GM12878 (cell line): ENCODE measurements at regions of chr12 and their contacts with region 1.

Region 1: GRCh38 chr12:75526655-75527511 is 15.5 kb upstream of the KRR1 start:
- DNase-seq: peak; percentile 54
- ATAC-seq: peak; percentile 98
- H3K4me3 ChIP-seq: no peak overlapping the region
- H3K27ac ChIP-seq: no peak overlapping the region
- H3K4me1 ChIP-seq: no peaks in the 10 kb centered on the region; the same call in 1 of the 2 replicates
- H3K27me3 ChIP-seq: no peaks in the 10 kb centered on the region
- CTCF ChIP-seq: peak; percentile 53 to 73 (median 62); a peak in 5 of 6 replicates
- EP300 ChIP-seq: peak; percentile 36 to 58; a peak in 1 of 4 replicates
- POLR2A ChIP-seq: no peak
- RAD21 ChIP-seq: peak; percentile 82

Region 2: GRCh38 chr12:75390899-75391538 is 135.9 kb before region 1 on chr12 and contains the start of gene GLIPR1L2:
- CTCF ChIA-PET with region 1: interaction called, 5 read pairs
- POLR2A ChIA-PET with region 1: interaction called, 5 read pairs
- RAD21 ChIA-PET with region 1: interaction called, 4 read pairs
- SMC1A ChIA-PET with region 1: interaction called, 10 read pairs
- in situ Hi-C with region 1: no loop called
- intact Hi-C with region 1: no loop called
- DNase-seq: peak; percentile 86
- ATAC-seq: peak; percentile 98
- H3K4me3 ChIP-seq: peak within 1 kb of the TSS; percentile 62
- H3K27ac ChIP-seq: peak within 1 kb of the TSS; percentile 91
- H3K4me1 ChIP-seq: peaks cover 7% of the 10 kb centered on the region
- H3K27me3 ChIP-seq: no peaks in the 10 kb centered on the region
- CTCF ChIP-seq: peak; percentile 79 to 91 (median 90)
- EP300 ChIP-seq: no peak
- POLR2A ChIP-seq: peak; percentile 76
- RAD21 ChIP-seq: peak; percentile 57
- polyA plus RNA-seq, gene GLIPR1L2: 0.04 TPM in 1 of 2 experiments, not detected in the other

Region 3: GRCh38 chr12:75437564-75437963 is 89.3 kb before region 1 on chr12:
- CTCF ChIA-PET with region 1: no interaction called
- POLR2A ChIA-PET with region 1: no interaction called
- RAD21 ChIA-PET with region 1: no interaction called
- SMC1A ChIA-PET with region 1: no interaction called
- in situ Hi-C with region 1: no loop called
- intact Hi-C with region 1: no loop called
- DNase-seq: no peak
- ATAC-seq: peak; percentile 93
- H3K4me3 ChIP-seq: no peak overlapping the region
- H3K27ac ChIP-seq: no peak overlapping the region
- H3K4me1 ChIP-seq: no peaks in the 10 kb centered on the region
- H3K27me3 ChIP-seq: no peaks in the 10 kb centered on the region
- CTCF ChIP-seq: peak; percentile 35 to 42 (median 41); a peak in 3 of 6 replicates
- EP300 ChIP-seq: no peak
- POLR2A ChIP-seq: no peak
- RAD21 ChIP-seq: peak; percentile 48

Region 4: DNA sequence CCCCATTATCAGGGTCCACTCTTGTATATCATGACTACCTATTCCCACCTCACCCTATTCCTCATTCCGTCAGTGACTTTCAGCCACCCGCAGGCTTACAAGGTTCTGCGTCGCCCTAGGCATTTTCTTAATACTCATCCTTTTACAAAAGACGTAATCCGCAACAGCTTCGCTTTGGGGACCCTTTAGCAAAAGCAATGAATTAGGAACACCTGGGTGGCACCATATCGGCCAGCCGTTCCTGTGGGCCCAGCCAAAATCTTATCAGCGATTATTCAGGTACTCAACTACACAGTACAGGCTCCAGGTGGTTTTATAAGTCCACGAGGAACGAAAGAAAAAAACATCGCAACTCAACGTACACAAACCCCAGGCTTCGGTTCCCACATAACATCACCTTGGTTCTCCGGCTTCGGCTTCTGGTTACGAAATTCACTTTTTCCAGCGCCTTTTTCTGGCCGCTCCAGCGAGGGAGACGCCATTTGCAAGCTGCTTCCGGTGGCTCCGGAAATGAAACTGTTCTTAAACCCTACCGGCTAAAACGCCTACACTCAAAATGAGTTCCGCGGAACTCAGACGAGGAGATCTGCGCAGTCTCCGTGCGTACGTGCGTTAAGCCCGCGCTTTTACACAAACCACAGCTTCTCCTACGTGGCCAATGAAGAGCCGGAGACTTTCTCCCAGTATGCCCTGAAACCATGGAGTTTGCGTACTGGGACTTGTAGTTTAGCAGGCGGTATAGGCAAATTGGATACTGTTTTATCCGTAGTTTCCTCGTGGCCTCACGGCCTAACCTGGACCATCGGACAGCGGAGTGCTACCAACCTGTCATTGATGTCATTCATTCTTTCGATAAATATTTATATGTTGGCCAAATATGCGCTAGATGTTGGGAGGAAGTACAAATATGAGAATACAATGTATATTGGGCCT is 15.5 kb before region 1 on chr12 and contains the start of gene KRR1:
- CTCF ChIA-PET with region 1: interaction called, 12 read pairs
- POLR2A ChIA-PET with region 1: no interaction called
- RAD21 ChIA-PET with region 1: interaction called, 13 read pairs
- SMC1A ChIA-PET with region 1: interaction called, 19 read pairs
- in situ Hi-C with region 1: no loop called
- intact Hi-C with region 1: no loop called
- DNase-seq: peak; percentile 89
- ATAC-seq: peak; percentile 93
- H3K4me3 ChIP-seq: peak within 1 kb of the TSS; percentile 76
- H3K27ac ChIP-seq: peak within 1 kb of the TSS; percentile 85
- H3K4me1 ChIP-seq: no peaks in the 10 kb centered on the region; the same call in 1 of the 2 replicates
- H3K27me3 ChIP-seq: no peaks in the 10 kb centered on the region
- CTCF ChIP-seq: no peak
- EP300 ChIP-seq: no peak
- POLR2A ChIP-seq: peak; percentile 77
- RAD21 ChIP-seq: no peak
- polyA plus RNA-seq, gene KRR1: 74.4 to 81.0 TPM

Region 5: DNA sequence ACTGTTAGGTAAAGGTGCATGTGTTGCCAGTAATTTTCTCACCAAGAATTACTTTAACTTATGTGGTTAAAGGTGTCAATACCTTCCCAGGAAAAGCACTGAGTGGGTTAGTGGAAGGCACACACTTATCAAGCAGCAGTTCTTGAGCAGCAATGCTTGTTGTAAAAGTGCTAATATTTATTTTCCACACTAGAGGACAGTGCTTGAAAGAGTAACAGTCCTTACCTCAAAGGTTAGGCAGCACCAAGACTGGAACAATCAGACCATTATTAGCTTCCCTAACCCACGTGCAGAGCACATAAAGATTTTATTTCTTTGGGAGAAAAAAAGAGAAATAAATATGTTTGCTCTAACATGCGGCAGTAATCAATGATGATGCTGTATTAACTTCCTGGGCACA is 33.3 kb after region 1 on chr12:
- CTCF ChIA-PET with region 1: interaction called, 18 read pairs
- POLR2A ChIA-PET with region 1: no interaction called
- RAD21 ChIA-PET with region 1: interaction called, 28 read pairs
- SMC1A ChIA-PET with region 1: interaction called, 9 read pairs
- in situ Hi-C with region 1: no loop called
- intact Hi-C with region 1: no loop called
- DNase-seq: no peak
- ATAC-seq: peak; percentile 88
- H3K4me3 ChIP-seq: no peak overlapping the region
- H3K27ac ChIP-seq: no peak overlapping the region
- H3K4me1 ChIP-seq: no peaks in the 10 kb centered on the region
- H3K27me3 ChIP-seq: no peaks in the 10 kb centered on the region
- CTCF ChIP-seq: peak; percentile 27 to 63 (median 31); a peak in 4 of 6 replicates
- EP300 ChIP-seq: no peak
- POLR2A ChIP-seq: no peak
- RAD21 ChIP-seq: peak; percentile 84

Region 6: DNA sequence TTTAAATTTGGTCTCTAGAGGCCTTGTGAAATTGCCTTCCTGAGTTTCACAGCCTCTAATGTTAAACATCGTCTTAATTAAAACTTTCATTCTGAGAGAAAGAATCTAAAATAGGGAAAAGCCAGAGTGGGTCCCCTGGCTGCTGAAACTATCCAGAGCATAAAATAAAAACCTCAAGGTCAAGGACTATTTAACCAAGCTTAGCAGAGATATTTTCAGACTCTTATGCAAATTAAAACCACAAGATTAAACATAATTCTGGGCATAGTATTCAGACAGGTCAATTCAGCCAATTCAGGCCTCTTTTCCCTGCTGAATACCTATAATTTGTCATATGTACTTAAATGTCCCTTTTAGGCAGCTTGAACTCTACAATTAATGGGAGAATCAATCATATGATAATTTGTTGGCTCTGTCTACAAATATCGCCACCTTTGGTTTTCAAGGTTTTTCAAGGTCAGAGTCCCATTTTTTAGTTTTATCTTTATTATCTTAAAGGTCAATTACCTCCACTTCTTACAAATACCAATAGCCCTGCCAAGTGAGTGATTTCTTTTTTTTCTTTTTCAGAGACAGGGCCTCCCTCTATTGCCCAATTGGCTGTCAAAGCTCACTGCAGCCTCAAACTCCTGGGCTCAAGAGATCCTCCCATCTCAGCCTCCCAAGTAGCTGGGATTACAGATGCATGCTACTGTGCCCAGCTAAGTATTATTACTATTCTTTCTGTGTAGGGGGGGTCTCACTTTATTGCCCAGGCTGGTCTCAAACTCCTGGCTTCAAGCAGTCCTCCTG is 247.6 kb after region 1 on chr12:
- CTCF ChIA-PET with region 1: interaction called, 7 read pairs
- POLR2A ChIA-PET with region 1: no interaction called
- RAD21 ChIA-PET with region 1: interaction called, 5 read pairs
- SMC1A ChIA-PET with region 1: interaction called, 14 read pairs
- in situ Hi-C with region 1: no loop called
- intact Hi-C with region 1: loop called (anchors 5 kb)
- DNase-seq: no peak
- ATAC-seq: peak; percentile 85
- H3K4me3 ChIP-seq: no peak overlapping the region
- H3K27ac ChIP-seq: no peak overlapping the region
- H3K4me1 ChIP-seq: peaks cover 6% of the 10 kb centered on the region; the same call in 1 of the 2 replicates
- H3K27me3 ChIP-seq: no peaks in the 10 kb centered on the region
- CTCF ChIP-seq: no peak
- EP300 ChIP-seq: no peak
- POLR2A ChIP-seq: no peak
- RAD21 ChIP-seq: no peak

Region 7: GRCh38 chr12:76020731-76021672 is 494.1 kb after region 1 on chr12:
- CTCF ChIA-PET with region 1: interaction called, 144 read pairs
- POLR2A ChIA-PET with region 1: no interaction called
- RAD21 ChIA-PET with region 1: interaction called, 10 read pairs
- SMC1A ChIA-PET with region 1: interaction called, 268 read pairs
- in situ Hi-C with region 1: no loop called
- intact Hi-C with region 1: no loop called
- DNase-seq: peak; percentile 19
- ATAC-seq: peak; percentile 76
- H3K4me3 ChIP-seq: no peak overlapping the region
- H3K27ac ChIP-seq: peak overlapping the region; percentile 18; the same call in 1 of the 2 replicates
- H3K4me1 ChIP-seq: peaks cover 14% of the 10 kb centered on the region
- H3K27me3 ChIP-seq: no peaks in the 10 kb centered on the region
- CTCF ChIP-seq: no peak
- EP300 ChIP-seq: no peak
- POLR2A ChIP-seq: no peak
- RAD21 ChIP-seq: no peak

Region 8: GRCh38 chr12:76348079-76348901 is 821.4 kb after region 1 on chr12 and contains the start of gene BBS10:
- CTCF ChIA-PET with region 1: interaction called, 19 read pairs
- POLR2A ChIA-PET with region 1: no interaction called
- RAD21 ChIA-PET with region 1: interaction called, 11 read pairs
- SMC1A ChIA-PET with region 1: interaction called, 13 read pairs
- in situ Hi-C with region 1: no loop called
- intact Hi-C with region 1: loop called (anchors 2 kb)
- DNase-seq: peak; percentile 70
- ATAC-seq: peak; percentile 99
- H3K4me3 ChIP-seq: peak within 1 kb of the TSS; percentile 84
- H3K27ac ChIP-seq: peak within 1 kb of the TSS; percentile 83
- H3K4me1 ChIP-seq: peaks cover 7% of the 10 kb centered on the region; the same call in 1 of the 2 replicates
- H3K27me3 ChIP-seq: no peaks in the 10 kb centered on the region
- CTCF ChIP-seq: peak in 2 of 3 experiments; percentile 22 to 39; a peak in 3 of 6 replicates
- EP300 ChIP-seq: no peak
- POLR2A ChIP-seq: peak; percentile 93
- RAD21 ChIP-seq: 0 out of 2 replicates have a peak, but pooled peaks have one; percentile 7
- polyA plus RNA-seq, gene BBS10: 1.2 to 1.5 TPM